MCF 10A (cell line): ENCODE measurements at regions of chr1 and their contacts with region 1.

Region 1: DNA sequence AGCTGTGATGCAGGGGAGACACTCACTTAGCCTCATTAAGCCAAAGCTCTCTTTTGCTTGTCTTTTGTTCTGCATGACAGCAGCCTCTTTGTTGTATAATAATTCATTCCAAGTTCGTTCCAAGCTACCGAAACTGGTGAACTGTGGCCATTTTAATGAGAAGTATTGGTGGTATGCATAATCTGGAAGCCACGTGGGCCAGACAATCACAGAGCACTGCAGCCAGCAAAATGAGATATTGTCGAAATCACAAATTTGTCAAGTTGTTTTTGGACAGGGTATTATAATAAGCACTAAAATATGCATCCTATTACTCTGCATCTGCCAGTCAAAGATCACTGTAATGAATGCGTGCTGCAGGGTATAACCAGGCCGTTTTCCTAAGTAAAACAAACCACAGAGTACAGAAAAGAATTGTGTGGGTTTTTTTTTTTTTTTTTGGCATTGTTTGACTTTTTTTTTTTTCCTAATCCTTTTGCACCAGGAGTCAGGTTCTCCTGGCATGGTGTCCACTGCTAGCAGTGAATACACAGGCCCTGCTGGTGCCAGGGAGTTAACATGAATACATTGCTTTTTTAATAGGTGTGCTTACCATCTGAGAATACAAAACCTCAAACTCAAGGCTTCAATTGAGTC is 423.9 kb downstream of the PTBP2 start:
- DNase-seq: peak; percentile 76
- H3K4me3 Mint-ChIP-seq: peak overlapping the region; percentile 25
- H3K27ac Mint-ChIP-seq: peak overlapping the region; percentile 93
- H3K4me1 Mint-ChIP-seq: peaks cover 40% of the 10 kb centered on the region
- H3K27me3 Mint-ChIP-seq: no peaks in the 10 kb centered on the region
- CTCF ChIP-seq: no peak

Region 2: DNA sequence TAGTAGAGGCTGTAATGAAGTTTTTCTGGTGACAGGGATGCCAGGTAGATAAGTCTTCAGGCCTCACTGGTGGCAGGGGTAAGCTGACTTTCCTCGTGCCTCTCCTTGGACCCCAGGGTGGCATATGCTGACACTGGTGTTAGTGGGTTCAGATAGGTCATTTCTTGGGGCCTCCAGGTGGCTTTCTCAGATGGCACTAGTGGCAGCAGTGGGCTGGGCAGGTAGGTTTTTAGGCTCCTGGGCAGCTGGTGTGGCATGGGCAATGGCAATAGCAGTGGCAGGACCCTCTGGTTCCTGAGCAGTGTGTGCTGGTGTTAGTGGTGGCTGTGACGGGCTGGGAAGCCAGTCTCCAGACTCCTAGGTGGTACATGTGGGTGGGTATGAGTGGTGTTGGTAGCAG is 283.6 kb before region 1 on chr1:
- CTCF ChIA-PET with region 1: no interaction called
- POLR2A ChIA-PET with region 1: no interaction called
- intact Hi-C with region 1: no loop called
- DNase-seq: no peak
- H3K4me3 Mint-ChIP-seq: no peak overlapping the region
- H3K27ac Mint-ChIP-seq: no peak overlapping the region
- H3K4me1 Mint-ChIP-seq: peaks cover 11% of the 10 kb centered on the region
- H3K27me3 Mint-ChIP-seq: no peaks in the 10 kb centered on the region
- CTCF ChIP-seq: no peak

Region 3: GRCh38 chr1:97163591-97164275 is 18.3 kb after region 1 on chr1:
- CTCF ChIA-PET with region 1: no interaction called
- POLR2A ChIA-PET with region 1: no interaction called
- intact Hi-C with region 1: no loop called
- DNase-seq: no peak
- H3K4me3 Mint-ChIP-seq: no peak overlapping the region
- H3K27ac Mint-ChIP-seq: no peak overlapping the region
- H3K4me1 Mint-ChIP-seq: no peaks in the 10 kb centered on the region
- H3K27me3 Mint-ChIP-seq: no peaks in the 10 kb centered on the region
- CTCF ChIP-seq: no peak

Region 4: DNA sequence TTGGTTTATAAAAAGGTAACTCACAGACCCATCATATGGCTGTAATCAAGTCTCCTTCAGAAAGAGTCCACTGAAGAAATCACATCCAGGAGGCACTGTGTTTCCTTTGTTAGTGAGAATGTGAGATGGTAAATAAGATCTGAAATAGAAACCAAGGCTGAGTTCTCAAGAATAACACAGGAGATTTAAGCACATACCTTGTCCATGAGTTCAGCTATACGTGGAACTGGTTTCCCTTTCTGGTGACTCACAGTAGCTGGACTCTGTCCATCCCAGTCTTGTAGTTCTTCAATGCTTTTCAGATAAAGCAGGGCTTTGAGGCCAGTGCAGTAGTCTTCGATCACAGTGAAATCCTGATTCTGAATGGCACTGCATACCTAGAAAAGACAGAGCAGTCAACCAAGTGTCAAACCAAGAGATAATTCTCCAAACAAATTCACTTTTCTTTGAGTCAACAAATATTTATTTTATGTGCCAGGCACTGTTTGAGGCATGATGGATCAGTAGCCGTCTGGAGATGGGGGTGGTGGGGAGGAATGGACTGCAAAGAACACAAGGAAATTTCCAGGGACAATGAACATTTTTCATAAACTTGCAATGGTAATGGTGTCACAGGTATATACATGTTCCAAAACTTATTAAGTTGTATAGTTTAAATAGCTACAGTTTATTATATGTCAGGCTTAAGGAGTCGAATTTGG is 47.6 kb after region 1 on chr1:
- CTCF ChIA-PET with region 1: interaction called, 3 read pairs
- POLR2A ChIA-PET with region 1: interaction called, 14 read pairs
- intact Hi-C with region 1: no loop called
- DNase-seq: peak; percentile 92
- H3K4me3 Mint-ChIP-seq: peak overlapping the region; percentile 30
- H3K27ac Mint-ChIP-seq: peak overlapping the region; percentile 89
- H3K4me1 Mint-ChIP-seq: peaks cover 24% of the 10 kb centered on the region
- H3K27me3 Mint-ChIP-seq: no peaks in the 10 kb centered on the region
- CTCF ChIP-seq: no peak